Activated T-helper 1 cell treated with anti-CD3 and anti-CD28 coated beads, Interleukin-12 subunit alpha, Interleukin-12 subunit beta, Interleukin-2, Interleukin-4 antibody, amounts not matched to agents 30 ng/mL and 10 ng/mL and 1 ng/mL, durations not matched to agents 14 hours and 24 hours and 36 hours (primary cell): ENCODE measurements at regions of chr2 and their contacts with region 1.

Region 1: DNA sequence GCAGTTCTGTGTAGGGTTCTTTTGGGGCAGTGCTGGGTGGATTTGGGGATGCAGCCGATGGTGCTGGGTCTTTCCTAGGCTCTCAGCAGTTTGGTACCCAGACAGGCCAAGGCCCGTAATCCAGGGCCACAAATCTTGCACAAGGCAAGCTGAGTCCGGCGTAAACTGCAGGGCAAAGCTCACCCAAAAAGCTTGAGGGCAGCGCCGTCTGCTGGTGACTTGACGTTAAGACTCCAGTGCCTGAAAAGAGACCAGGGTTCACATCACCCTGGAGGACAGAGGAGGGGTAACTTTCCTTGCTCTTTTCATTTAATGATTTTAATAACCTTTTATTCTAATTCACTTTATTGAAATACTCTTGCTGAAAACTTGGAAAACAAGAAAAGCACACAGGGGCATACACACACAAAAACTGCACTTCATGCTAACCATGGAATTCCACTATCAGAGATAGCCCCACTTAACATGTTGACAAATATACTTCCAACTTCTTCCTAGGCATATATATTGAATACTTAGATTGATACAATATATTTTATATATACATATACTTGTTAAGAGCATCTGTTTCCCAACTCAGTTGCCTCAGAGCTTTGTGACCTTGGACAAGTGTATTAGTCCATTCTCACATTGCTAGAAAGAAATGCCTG is 38.9 kb downstream of the CNGA3 start:
- DNase-seq: peak; percentile 59
- H3K4me3 Mint-ChIP-seq: no peak overlapping the region
- H3K27ac Mint-ChIP-seq: no peak overlapping the region
- H3K4me1 Mint-ChIP-seq: no peaks in the 10 kb centered on the region
- H3K27me3 Mint-ChIP-seq: peaks cover 6% of the 10 kb centered on the region

Region 2: GRCh38 chr2:97697252-97698235 is 687.6 kb before region 1 on chr2:
- intact Hi-C with region 1: loop called (anchors 1 kb)
- DNase-seq: peak; percentile 82
- H3K4me3 Mint-ChIP-seq: no peak overlapping the region
- H3K27ac Mint-ChIP-seq: no peak overlapping the region
- H3K4me1 Mint-ChIP-seq: peaks cover 19% of the 10 kb centered on the region
- H3K27me3 Mint-ChIP-seq: peaks cover 8% of the 10 kb centered on the region

Region 3: DNA sequence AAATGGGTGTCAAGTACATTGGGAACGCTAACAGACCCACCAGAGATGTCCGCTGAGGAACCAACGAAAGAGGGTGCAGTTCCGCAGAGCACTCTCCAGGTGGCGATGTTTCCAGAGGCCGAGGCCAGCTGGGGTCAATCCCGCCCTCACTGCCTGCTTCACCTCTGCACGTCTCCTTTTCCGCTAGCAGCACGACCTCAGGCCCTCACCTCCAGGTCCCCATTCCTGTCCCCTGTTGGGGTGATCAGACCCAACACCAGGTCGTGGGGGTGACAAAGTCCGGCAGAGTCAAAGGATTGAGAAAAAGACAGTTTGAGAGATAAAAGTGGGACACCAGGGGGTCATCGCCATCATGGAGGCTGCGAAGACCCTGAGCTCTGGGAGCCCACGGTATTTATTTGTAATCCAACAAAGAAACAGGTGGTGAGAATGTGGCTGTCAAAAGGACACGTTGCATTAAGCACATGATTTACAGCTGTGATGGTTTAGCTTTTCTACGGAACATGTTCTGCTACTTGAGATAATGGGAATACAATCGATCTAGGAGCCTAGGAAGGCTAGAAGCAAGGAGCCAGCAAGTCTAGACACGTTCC is 644.5 kb before region 1 on chr2:
- intact Hi-C with region 1: loop called (anchors 2 kb)
- DNase-seq: no peak
- H3K4me3 Mint-ChIP-seq: no peak overlapping the region
- H3K27ac Mint-ChIP-seq: peak overlapping the region; percentile 18
- H3K4me1 Mint-ChIP-seq: peaks cover 56% of the 10 kb centered on the region
- H3K27me3 Mint-ChIP-seq: no peaks in the 10 kb centered on the region

Region 4: GRCh38 chr2:97747716-97748115 is 637.5 kb before region 1 on chr2:
- intact Hi-C with region 1: loop called (anchors 2 kb)
- DNase-seq: no peak
- H3K4me3 Mint-ChIP-seq: no peak overlapping the region
- H3K27ac Mint-ChIP-seq: no peak overlapping the region
- H3K4me1 Mint-ChIP-seq: peaks cover 53% of the 10 kb centered on the region
- H3K27me3 Mint-ChIP-seq: no peaks in the 10 kb centered on the region

Region 5: GRCh38 chr2:98334439-98335078 is 50.6 kb before region 1 on chr2:
- intact Hi-C with region 1: no loop called
- DNase-seq: no peak
- H3K4me3 Mint-ChIP-seq: no peak overlapping the region
- H3K27ac Mint-ChIP-seq: no peak overlapping the region
- H3K4me1 Mint-ChIP-seq: no peaks in the 10 kb centered on the region
- H3K27me3 Mint-ChIP-seq: peaks cover 5% of the 10 kb centered on the region